ENCODE measurements at regions of chr17 and their contacts with region 1.

Region 1: DNA sequence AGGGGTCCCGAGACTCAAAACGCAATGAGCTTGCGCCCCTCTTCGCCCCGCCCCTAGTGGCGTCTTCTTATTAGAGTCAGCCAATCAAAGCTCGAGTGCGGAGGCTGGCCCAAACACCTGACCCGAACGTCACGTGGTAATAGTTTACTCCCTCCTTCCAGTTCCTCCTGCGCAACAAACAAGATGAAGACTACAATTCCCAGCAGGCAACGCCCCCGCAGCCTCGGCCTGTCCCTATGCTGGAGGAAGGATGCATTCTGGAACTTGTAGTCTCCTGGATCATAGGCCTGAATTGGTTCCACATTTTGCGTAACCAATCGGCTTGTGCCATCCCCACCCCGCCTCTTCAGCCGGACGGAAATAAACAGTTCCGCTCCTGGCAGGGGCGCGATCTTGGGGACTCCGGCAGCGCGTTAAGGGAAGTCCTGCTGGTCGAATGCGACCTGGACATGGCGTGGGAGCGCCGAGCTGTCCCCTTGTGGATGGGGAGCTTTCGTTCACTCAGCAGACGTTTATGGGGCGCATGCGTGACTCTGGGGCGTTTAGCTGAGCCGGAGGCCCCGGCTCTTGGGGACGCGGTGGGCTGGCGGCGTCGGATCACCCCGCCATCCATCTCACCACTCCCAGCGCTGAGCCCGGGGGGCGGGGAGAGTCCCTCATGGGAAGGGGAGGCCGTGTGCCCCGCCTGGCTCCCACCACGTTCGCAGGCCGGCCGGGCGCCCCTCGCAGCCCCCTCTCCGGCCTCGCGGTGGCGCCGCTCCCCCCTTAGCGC is at the start of gene WBP2:
- DNase-seq: peak; percentile 97
- H3K4me3 ChIP-seq: peak within 1 kb of the TSS; percentile 95
- H3K27ac ChIP-seq: peak within 1 kb of the TSS; percentile 99
- H3K4me1 ChIP-seq: peaks cover 70% of the 10 kb centered on the region
- H3K27me3 ChIP-seq: no peaks in the 10 kb centered on the region
- CTCF ChIP-seq: peak; percentile 59
- total RNA-seq, gene WBP2: 144 TPM

Region 2: GRCh38 chr17:75784473-75785015 is 71.0 kb before region 1 on chr17 and contains the start of gene UNK:
- intact Hi-C with region 1: loop called (anchors 5 kb)
- DNase-seq: peak; percentile 96
- H3K4me3 ChIP-seq: peak within 1 kb of the TSS; percentile 74
- H3K27ac ChIP-seq: peak within 1 kb of the TSS; percentile 100
- H3K4me1 ChIP-seq: peaks cover 49% of the 10 kb centered on the region
- H3K27me3 ChIP-seq: no peaks in the 10 kb centered on the region
- CTCF ChIP-seq: no peak
- total RNA-seq, gene UNK: 14.7 TPM

Region 3: GRCh38 chr17:75795820-75796607 is 59.5 kb before region 1 on chr17:
- intact Hi-C with region 1: no loop called
- DNase-seq: no peak
- H3K4me3 ChIP-seq: no peak overlapping the region
- H3K27ac ChIP-seq: no peak overlapping the region
- H3K4me1 ChIP-seq: peaks cover 5% of the 10 kb centered on the region
- H3K27me3 ChIP-seq: no peaks in the 10 kb centered on the region
- CTCF ChIP-seq: no peak

Region 4: GRCh38 chr17:75892556-75893224 is 37.2 kb after region 1 on chr17:
- intact Hi-C with region 1: loop called (anchors 2 kb)
- DNase-seq: no peak
- H3K4me3 ChIP-seq: no peak overlapping the region
- H3K27ac ChIP-seq: no peak overlapping the region
- H3K4me1 ChIP-seq: peaks cover 44% of the 10 kb centered on the region
- H3K27me3 ChIP-seq: no peaks in the 10 kb centered on the region
- CTCF ChIP-seq: no peak

Measured in left ventricle myocardium inferior (tissue), 1 donor.